ENCODE measurements at regions of chr16 and their contacts with region 1.

Region 1: GRCh38 chr16:2023098-2023925 is 3.4 kb upstream of the NHERF2 start:
- DNase-seq: peak; percentile 89 to 96 (median 94)
- H3K4me3 ChIP-seq: peak overlapping the region in 2 of 4 donors; percentile 1 to 29
- H3K27ac ChIP-seq: peak overlapping the region in 3 of 5 donors; percentile 1 to 66 (median 65)
- H3K4me1 ChIP-seq: peaks cover 14 to 37% of the 10 kb centered on the region in 2 donors
- H3K27me3 ChIP-seq: peaks cover 17% of the 10 kb centered on the region
- CTCF ChIP-seq: peak; percentile 93 to 99 (median 98)
- POLR2A ChIP-seq: peak in 1 of 2 donors; percentile 48

Region 2: GRCh38 chr16:1734123-1734832 is 289.0 kb before region 1 on chr16:
- intact Hi-C with region 1: no loop called
- DNase-seq: no peak
- H3K4me3 ChIP-seq: no peak overlapping the region
- H3K27ac ChIP-seq: no peak overlapping the region
- H3K4me1 ChIP-seq: no peaks in the 10 kb centered on the region
- H3K27me3 ChIP-seq: no peaks in the 10 kb centered on the region
- CTCF ChIP-seq: no peak
- POLR2A ChIP-seq: no peak

Region 3: DNA sequence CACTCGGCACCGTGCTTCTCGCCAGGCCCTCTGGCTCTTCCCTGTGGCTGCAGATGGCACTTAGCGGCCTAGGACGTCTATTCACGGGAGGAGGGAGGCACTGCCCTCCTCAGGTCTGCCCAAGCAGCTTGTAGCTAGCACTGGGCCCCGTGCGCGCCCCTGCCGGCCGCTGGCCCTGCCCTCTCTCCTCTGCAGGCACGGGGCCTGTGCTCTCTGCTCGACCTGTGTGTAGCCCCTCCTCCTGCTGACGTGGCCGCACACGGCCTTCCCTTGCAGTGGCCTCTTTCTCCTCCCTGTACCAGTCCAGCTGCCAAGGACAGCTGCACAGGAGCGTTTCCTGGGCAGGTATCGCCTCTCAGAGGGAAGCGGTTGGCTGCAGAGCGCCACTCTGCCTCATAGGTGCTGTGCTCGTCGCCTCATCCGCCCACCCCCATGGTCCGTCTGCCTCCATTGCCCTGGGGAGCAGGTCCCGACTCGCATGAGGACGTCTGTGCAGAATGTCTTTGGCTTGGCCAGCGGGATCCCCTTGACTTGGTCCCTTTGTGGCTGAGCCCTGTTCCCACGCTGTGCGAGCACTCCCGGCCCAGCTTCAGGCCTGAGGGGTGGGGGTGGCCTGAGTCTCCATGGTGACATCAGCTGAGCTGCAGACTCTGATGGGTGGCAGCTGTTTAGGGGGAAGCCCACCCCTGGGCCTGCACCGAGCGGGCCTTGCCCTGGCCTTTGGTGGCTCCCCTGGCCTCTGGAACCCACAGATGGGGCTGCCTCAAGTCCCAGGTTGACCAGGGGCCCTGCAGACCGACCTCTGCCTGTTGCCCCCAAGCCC is 59.1 kb after region 1 on chr16:
- intact Hi-C with region 1: loop called in 1 of 2 experiments (anchors 5 kb)
- DNase-seq: peak; percentile 81 to 94 (median 91)
- H3K4me3 ChIP-seq: no peak overlapping the region
- H3K27ac ChIP-seq: peak overlapping the region in 3 of 5 donors; percentile 26 to 81 (median 76)
- H3K4me1 ChIP-seq: peaks cover 0 to 19% of the 10 kb centered on the region in 2 donors
- H3K27me3 ChIP-seq: no peaks in the 10 kb centered on the region
- CTCF ChIP-seq: peak; percentile 12 to 43 (median 38)
- POLR2A ChIP-seq: peak; percentile 18 to 73

Region 4: GRCh38 chr16:2236337-2237101 is 213.2 kb after region 1 on chr16 and contains the start of gene DNASE1L2:
- intact Hi-C with region 1: no loop called
- DNase-seq: no peak
- H3K4me3 ChIP-seq: peak within 1 kb of the TSS in 1 of 4 donors; percentile 7
- H3K27ac ChIP-seq: no peak within 1 kb of the TSS
- H3K4me1 ChIP-seq: peaks cover 12 to 21% of the 10 kb centered on the region in 2 donors
- H3K27me3 ChIP-seq: peaks cover 9% of the 10 kb centered on the region
- CTCF ChIP-seq: no peak
- POLR2A ChIP-seq: no peak
- total RNA-seq, gene DNASE1L2: 0.25 to 2.9 (median 0.72) TPM in 8 of 9 donors, not detected in the other

Measured in adrenal gland (tissue), 19 donors.